Aorta (tissue), 5 donors: ENCODE measurements at regions of chr6 and their contacts with region 1.

Region 1: GRCh38 chr6:160455541-160456213 is 107.5 kb downstream of the SLC22A3 start:
- DNase-seq: peak; percentile 57 to 82
- ATAC-seq: peak; percentile 90
- H3K4me3 ChIP-seq: no peak overlapping the region
- H3K27ac ChIP-seq: peak overlapping the region in 1 of 2 donors; percentile 79
- H3K4me1 ChIP-seq: no peaks in the 10 kb centered on the region
- H3K27me3 ChIP-seq: no peaks in the 10 kb centered on the region

Region 2: GRCh38 chr6:159862103-159862502 is 593.6 kb before region 1 on chr6:
- intact Hi-C with region 1: loop called (anchors 10 kb)
- DNase-seq: no peak
- ATAC-seq: no peak
- H3K4me3 ChIP-seq: no peak overlapping the region
- H3K27ac ChIP-seq: no peak overlapping the region
- H3K4me1 ChIP-seq: no peaks in the 10 kb centered on the region
- H3K27me3 ChIP-seq: no peaks in the 10 kb centered on the region

Region 3: GRCh38 chr6:160088069-160088783 is 367.5 kb before region 1 on chr6:
- intact Hi-C with region 1: loop called (anchors 1 to 2 kb)
- DNase-seq: peak; percentile 79 to 91
- ATAC-seq: peak; percentile 88
- H3K4me3 ChIP-seq: no peak overlapping the region
- H3K27ac ChIP-seq: no peak overlapping the region
- H3K4me1 ChIP-seq: no peaks in the 10 kb centered on the region
- H3K27me3 ChIP-seq: no peaks in the 10 kb centered on the region

Region 4: DNA sequence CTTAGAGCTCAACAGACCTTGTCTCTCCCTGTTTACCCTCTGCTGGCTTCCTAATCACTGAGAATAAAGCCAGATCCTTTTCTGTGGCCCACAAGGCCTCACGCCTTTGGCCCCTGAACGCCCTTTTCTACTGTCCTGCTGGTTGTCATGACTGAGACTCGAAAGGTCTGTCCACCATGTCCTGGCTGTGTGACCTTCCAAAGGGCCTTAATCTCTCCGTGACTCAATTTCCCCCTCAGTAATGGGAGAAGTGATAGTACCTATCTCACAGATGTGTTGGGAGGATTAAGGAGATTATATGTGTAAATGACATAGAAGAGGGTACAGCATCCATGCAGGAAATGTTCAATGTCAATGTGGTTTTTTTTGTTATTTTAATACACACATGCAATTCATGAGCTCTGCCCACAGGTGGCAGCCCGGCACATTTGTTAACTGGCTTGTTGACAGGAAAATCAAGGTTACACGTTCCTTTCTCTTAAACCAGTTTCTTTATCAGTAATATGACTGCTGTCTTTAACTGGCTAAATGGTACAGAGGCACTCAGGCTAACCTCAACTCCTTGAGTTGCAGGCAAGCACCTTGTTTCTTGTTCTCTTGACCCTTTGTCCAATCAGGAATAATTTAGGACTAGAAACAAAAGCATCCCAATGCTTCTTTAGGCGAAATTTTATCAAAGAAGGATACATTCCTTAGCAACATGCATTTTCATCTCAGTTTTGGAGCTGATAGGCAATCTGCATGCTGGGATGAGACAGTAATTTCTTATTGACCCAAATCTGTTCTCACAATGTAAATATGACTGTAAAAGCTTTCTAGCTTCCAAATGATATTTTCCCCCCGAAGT is 317.5 kb before region 1 on chr6:
- intact Hi-C with region 1: loop called (anchors 2 kb)
- DNase-seq: no peak
- ATAC-seq: peak; percentile 27
- H3K4me3 ChIP-seq: no peak overlapping the region
- H3K27ac ChIP-seq: peak overlapping the region in 1 of 2 donors; percentile 84
- H3K4me1 ChIP-seq: peaks cover 0 to 6% of the 10 kb centered on the region in 2 donors
- H3K27me3 ChIP-seq: no peaks in the 10 kb centered on the region

Region 5: DNA sequence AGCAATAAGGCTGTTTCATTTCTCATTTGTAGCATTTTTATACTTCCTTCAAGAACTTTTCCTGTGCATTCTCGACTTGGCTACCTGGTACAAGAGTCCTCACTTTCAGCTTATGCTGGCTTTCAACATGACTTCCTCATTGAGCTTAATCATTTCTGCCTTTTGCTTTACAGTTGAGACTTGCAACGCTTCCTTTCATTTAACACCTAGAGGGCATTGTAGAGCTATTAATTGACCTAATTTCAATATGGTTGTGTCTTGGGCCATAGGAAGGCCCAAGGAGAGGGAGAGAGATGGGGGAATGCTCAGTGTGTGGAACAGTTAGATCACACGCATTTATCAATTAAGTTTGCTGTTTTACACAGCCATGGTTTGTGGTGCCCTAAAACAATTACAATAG is 234.3 kb before region 1 on chr6:
- intact Hi-C with region 1: loop called in 1 of 2 experiments (anchors 10 kb)
- DNase-seq: no peak
- ATAC-seq: no peak
- H3K4me3 ChIP-seq: no peak overlapping the region
- H3K27ac ChIP-seq: peak overlapping the region in 1 of 2 donors; percentile 34
- H3K4me1 ChIP-seq: peaks cover 5 to 7% of the 10 kb centered on the region in 2 donors
- H3K27me3 ChIP-seq: no peaks in the 10 kb centered on the region

Region 6: GRCh38 chr6:160355001-160355400 is 100.7 kb before region 1 on chr6:
- intact Hi-C with region 1: loop called in 1 of 2 experiments (anchors 1 kb)
- DNase-seq: no peak
- ATAC-seq: peak; percentile 42
- H3K4me3 ChIP-seq: no peak overlapping the region
- H3K27ac ChIP-seq: peak overlapping the region; percentile 10 to 86
- H3K4me1 ChIP-seq: peaks cover 7 to 19% of the 10 kb centered on the region in 2 donors
- H3K27me3 ChIP-seq: no peaks in the 10 kb centered on the region

Region 7: GRCh38 chr6:160534050-160534696 is 78.5 kb after region 1 on chr6:
- intact Hi-C with region 1: loop called in 1 of 2 experiments (anchors 1 kb)
- DNase-seq: peak; percentile 52 to 81
- ATAC-seq: peak; percentile 86
- H3K4me3 ChIP-seq: no peak overlapping the region
- H3K27ac ChIP-seq: no peak overlapping the region
- H3K4me1 ChIP-seq: no peaks in the 10 kb centered on the region
- H3K27me3 ChIP-seq: peaks cover 0 to 2% of the 10 kb centered on the region in 2 donors